ENCODE measurements at regions of chr18 and their contacts with region 1.

Region 1: DNA sequence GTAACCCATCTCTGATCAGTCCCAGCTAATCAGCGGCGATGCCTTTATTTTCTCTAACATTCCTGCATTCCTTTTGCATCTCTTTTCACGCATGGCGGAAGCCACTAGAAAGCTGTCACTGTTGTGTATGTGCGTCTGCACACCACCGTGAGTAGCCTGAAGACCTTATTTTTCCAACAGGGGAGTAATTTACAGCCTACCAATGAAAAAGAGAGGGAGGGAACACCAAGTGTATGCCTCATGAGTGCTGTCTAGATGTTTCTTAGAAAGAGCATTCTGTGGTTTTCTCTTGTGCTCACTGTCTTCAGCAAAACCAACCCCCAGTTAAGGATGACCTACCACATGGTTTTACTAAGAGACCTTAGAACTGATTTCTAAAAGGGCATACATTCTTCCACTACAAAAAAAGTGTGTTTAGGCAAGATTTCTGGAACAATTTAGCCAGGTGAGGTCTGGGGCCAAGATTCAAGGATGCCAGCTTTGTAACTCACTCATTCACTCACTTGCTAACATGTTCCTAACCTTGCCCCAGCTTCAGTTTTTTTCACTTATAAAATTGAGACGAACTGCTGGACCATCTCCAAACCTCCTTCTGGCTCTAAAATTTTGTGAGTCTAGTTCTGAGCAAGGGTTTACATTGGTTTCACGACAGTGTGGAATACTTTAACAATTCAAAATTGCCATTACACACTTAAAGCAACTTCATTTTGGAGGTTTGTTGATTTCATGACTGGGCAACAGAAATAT is 51.4 kb downstream of the BCL2 start:
- DNase-seq: no peak
- ATAC-seq: no peak
- H3K4me3 ChIP-seq: no peak overlapping the region
- H3K4me3 Mint-ChIP-seq: no peak overlapping the region
- H3K27ac ChIP-seq: no peak overlapping the region
- H3K27ac Mint-ChIP-seq: peak overlapping the region; percentile 59
- H3K4me1 ChIP-seq: peaks cover 33 to 40% of the 10 kb centered on the region in 2 donors
- H3K4me1 Mint-ChIP-seq: peaks cover 55% of the 10 kb centered on the region
- H3K27me3 ChIP-seq: no peaks in the 10 kb centered on the region
- H3K27me3 Mint-ChIP-seq: no peaks in the 10 kb centered on the region
- CTCF ChIP-seq: no peak

Region 2: GRCh38 chr18:63234841-63235240 is 33.3 kb before region 1 on chr18:
- CTCF ChIA-PET with region 1: no interaction called
- POLR2A ChIA-PET with region 1: no interaction called
- intact Hi-C with region 1: loop called (anchors 5 kb)
- DNase-seq: no peak
- ATAC-seq: no peak
- H3K4me3 ChIP-seq: no peak overlapping the region
- H3K4me3 Mint-ChIP-seq: peak overlapping the region; percentile 58
- H3K27ac ChIP-seq: peak overlapping the region in 1 of 2 donors; percentile 32
- H3K27ac Mint-ChIP-seq: peak overlapping the region; percentile 12
- H3K4me1 ChIP-seq: peaks cover 11 to 20% of the 10 kb centered on the region in 2 donors
- H3K4me1 Mint-ChIP-seq: peaks cover 47% of the 10 kb centered on the region
- H3K27me3 ChIP-seq: no peaks in the 10 kb centered on the region
- H3K27me3 Mint-ChIP-seq: no peaks in the 10 kb centered on the region
- CTCF ChIP-seq: no peak

Region 3: GRCh38 chr18:63539904-63540510 is 271.9 kb after region 1 on chr18:
- CTCF ChIA-PET with region 1: no interaction called
- POLR2A ChIA-PET with region 1: no interaction called
- intact Hi-C with region 1: no loop called
- DNase-seq: no peak
- ATAC-seq: no peak
- H3K4me3 ChIP-seq: no peak overlapping the region
- H3K4me3 Mint-ChIP-seq: no peak overlapping the region
- H3K27ac ChIP-seq: no peak overlapping the region
- H3K27ac Mint-ChIP-seq: no peak overlapping the region
- H3K4me1 ChIP-seq: no peaks in the 10 kb centered on the region
- H3K4me1 Mint-ChIP-seq: no peaks in the 10 kb centered on the region
- H3K27me3 ChIP-seq: peaks cover 0 to 3% (median 0%) of the 10 kb centered on the region in 4 experiments
- H3K27me3 Mint-ChIP-seq: peaks cover 28% of the 10 kb centered on the region
- CTCF ChIP-seq: no peak

Measured in B cell (primary cell).